ENCODE measurements at regions of chr6 and their contacts with region 1.

Region 1: DNA sequence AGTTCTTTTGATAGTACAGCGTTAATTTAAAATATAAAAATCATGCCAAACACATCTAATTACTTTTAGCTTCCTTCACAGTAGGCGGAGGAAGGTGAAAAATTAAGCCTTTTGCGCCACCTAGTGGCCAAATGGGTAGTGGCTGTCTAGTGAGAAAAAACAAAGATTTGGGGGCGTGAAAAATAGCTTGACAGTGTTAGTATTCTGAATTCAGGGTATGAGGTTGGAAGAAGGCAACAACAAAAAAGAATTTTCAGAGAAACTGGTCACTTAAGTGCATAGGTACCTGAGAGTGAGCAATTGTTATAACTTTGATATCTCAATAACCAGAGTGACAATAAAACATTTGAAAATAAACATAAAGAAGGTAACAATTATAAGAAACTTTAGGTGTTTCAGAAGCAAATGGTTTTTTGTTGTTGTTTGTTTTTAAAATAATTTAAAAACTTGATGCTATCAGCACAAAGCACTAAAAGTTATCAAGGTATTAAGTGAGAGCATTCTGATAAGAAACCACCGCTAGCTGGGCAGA is 14.3 kb downstream of the PSMB9 start:
- H3K4me3 ChIP-seq: no peak overlapping the region
- H3K27ac ChIP-seq: no peak overlapping the region
- H3K4me1 ChIP-seq: 0 out of 2 replicates have a peak, but pooled peaks cover 3% of the 10 kb centered on the region
- CTCF ChIP-seq: peak; percentile 63

Region 2: DNA sequence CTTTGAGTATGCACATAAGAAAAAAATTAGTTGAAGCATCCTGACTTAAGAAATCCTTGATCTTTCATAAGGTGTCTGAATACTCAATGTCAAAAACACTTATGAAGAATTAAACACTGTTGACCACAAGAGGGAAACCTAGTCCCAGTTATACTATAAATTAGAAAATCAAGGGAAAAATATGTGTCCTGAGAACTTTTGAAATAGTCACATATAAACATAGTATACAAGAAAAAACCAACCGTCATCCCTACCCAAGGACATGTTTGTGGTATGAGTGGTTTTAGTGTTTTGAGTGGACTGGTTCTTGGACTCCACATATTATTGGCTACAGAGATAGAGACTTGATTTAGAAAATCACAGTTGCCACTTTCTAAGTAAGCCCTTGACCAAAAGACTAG is 436.3 kb before region 1 on chr6:
- CTCF ChIA-PET with region 1: interaction called, 12 read pairs
- POLR2A ChIA-PET with region 1: no interaction called
- H3K4me3 ChIP-seq: no peak overlapping the region
- H3K27ac ChIP-seq: no peak overlapping the region
- H3K4me1 ChIP-seq: no peaks in the 10 kb centered on the region
- CTCF ChIP-seq: no peak

Region 3: DNA sequence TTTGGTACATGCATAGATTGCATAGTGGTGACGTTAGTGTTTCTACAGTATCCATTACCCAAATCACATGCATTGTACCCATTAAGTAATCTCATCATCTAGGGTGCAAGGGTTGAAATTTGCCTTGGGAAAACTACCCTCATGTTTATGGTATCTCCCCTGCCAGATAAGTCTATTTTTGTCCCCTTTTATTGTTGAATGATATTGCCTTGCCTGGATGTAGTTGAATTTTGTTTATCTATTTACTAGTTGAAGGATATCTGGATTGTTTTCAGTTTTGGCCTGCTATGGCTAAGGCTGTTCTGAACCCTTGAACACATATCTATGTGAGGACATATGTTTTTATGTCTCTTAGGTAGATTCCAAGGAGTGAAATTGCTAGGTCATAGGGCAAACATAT is 292.1 kb before region 1 on chr6:
- CTCF ChIA-PET with region 1: no interaction called
- POLR2A ChIA-PET with region 1: no interaction called
- H3K4me3 ChIP-seq: no peak overlapping the region
- H3K27ac ChIP-seq: no peak overlapping the region
- H3K4me1 ChIP-seq: no peaks in the 10 kb centered on the region
- CTCF ChIP-seq: no peak

Region 4: DNA sequence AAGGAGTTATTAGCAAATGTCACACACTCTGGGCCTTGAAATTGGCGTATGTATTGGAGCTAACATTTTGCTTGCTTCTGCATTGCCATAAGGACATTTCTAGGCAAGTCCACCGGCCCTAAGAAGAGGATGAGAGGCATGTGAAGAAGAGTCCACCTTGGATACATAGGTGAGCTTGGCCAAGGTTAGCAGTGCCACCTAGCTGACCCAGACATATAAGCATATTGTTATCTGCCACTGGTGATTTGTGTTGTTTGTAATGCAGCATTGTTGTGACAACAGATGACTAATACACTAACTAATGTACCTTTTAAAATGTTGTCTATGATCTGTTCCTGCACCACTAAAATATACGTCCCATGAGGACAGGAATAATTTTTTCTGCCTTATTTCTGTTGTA is 151.9 kb before region 1 on chr6:
- CTCF ChIA-PET with region 1: interaction called, 12 read pairs
- POLR2A ChIA-PET with region 1: no interaction called
- H3K4me3 ChIP-seq: no peak overlapping the region
- H3K27ac ChIP-seq: no peak overlapping the region
- H3K4me1 ChIP-seq: no peaks in the 10 kb centered on the region
- CTCF ChIP-seq: no peak

Region 5: DNA sequence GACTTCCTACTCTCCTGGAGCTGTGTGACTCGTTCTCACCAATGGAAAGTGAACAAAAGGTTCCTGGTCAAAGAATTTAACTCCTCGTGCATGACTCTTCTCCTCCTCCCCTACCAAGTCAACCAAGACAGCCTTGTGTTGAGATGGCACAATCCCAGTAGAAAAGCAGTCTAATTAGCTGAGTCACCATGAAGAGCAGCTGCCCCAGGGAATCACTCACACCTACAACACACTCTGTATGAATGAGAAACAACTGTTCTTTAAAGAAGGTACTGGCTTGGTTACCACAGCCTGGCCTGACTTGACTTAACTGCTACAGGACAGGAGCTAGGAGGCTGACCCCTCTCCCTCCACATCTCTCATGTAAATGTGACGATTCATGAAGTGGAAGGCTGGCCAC is 48.6 kb before region 1 on chr6:
- CTCF ChIA-PET with region 1: interaction called, 20 read pairs
- POLR2A ChIA-PET with region 1: no interaction called
- H3K4me3 ChIP-seq: no peak overlapping the region
- H3K27ac ChIP-seq: no peak overlapping the region
- H3K4me1 ChIP-seq: no peaks in the 10 kb centered on the region
- CTCF ChIP-seq: no peak

Region 6: DNA sequence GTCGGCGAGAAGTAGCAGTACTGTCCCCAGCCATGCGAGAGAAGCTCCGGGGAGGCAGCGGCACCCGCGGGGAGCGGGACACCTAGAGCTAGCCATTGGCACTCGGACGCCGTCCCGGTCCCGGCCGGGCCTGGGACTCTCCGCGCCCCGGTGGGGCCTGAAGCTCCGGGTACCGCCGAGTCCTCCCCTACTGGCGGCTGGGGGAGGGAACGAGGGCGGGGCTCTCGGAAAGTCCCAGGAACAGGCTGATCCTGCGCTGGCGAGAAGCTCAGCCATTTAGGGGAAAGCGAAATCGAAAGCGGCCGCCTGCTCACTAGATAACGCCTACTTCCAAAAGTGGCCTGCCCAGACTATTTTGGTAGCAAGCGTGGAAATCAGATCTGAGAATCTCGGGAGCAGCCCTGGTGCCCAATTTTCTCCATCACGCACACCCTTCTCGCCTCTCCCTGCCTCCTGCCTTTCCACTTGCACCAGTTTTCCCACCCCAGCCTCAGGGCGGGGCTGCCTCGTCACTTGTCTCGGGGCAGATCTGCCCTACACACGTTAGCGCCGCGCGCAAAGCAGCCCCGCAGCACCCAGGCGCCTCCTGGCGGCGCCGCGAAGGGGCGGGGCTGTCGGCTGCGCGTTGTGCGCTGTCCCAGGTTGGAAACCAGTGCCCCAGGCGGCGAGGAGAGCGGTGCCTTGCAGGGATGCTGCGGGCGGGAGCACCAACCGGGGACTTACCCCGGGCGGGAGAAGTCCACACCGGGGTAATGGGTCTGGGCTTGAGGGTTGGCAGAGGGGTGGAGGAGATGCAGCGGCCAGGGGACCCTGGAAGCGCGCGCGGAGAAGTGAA is 14.6 kb before region 1 on chr6 and contains the starts of genes PSMB9 and TAP1:
- CTCF ChIA-PET with region 1: interaction called, 131 read pairs
- POLR2A ChIA-PET with region 1: interaction called, 6 read pairs
- H3K4me3 ChIP-seq: peak within 1 kb of the TSS; percentile 85
- H3K27ac ChIP-seq: peak within 1 kb of the TSS; percentile 71
- H3K4me1 ChIP-seq: no peaks in the 10 kb centered on the region; the same call in 1 of the 2 replicates
- CTCF ChIP-seq: peak; percentile 98

Region 7: DNA sequence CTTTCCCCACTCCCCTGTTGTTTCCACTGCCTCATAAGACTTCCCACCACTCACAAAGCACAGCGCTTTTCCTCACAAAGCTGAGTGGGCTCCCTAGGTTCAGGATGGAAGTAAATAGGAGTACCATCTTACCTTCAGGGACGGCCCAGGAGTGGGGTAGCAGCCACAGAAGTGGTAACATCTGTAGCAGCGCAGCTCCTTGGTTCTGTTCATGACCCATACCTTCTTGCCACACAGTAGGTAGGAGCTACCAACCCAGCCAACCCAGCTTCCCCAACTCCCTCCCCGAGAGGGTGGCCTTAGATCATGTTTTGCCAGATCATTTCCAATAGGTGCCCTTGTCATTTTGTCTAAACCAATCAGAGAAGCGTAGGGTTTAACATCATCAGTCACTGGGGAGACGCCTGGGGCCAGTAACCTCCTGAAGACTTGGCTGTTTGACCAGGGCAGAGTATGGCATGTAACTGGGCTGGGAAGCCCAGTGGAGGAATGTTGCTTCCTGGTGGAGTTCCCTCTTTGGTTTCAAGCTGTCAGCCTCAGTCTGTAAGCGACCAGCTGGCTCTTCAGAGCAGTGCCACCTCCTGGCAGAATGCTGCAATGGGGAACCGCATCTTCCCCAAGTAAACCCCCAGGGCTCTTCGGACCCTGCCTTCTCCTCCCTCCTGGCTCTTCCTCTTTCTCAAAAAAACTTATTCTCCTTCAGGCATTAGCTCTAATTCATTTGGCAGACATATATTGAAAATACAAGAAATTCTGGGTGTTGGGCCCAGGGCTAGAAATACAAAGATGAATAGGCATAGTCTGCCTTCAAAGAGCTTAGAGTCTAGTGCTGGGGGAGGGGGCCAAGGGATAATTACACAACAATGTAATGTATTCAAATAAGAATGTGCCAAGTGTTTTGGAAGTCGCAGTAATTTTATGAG is 84.8 kb after region 1 on chr6 and contains the start of gene HLA-DMA:
- CTCF ChIA-PET with region 1: interaction called, 14 read pairs
- POLR2A ChIA-PET with region 1: no interaction called
- H3K4me3 ChIP-seq: no peak within 1 kb of the TSS
- H3K27ac ChIP-seq: no peak within 1 kb of the TSS
- H3K4me1 ChIP-seq: no peaks in the 10 kb centered on the region
- CTCF ChIP-seq: 0 out of 2 replicates have a peak, but pooled peaks have one; percentile 31